ENCODE measurements at regions of chr2 and their contacts with region 1.

Region 1: DNA sequence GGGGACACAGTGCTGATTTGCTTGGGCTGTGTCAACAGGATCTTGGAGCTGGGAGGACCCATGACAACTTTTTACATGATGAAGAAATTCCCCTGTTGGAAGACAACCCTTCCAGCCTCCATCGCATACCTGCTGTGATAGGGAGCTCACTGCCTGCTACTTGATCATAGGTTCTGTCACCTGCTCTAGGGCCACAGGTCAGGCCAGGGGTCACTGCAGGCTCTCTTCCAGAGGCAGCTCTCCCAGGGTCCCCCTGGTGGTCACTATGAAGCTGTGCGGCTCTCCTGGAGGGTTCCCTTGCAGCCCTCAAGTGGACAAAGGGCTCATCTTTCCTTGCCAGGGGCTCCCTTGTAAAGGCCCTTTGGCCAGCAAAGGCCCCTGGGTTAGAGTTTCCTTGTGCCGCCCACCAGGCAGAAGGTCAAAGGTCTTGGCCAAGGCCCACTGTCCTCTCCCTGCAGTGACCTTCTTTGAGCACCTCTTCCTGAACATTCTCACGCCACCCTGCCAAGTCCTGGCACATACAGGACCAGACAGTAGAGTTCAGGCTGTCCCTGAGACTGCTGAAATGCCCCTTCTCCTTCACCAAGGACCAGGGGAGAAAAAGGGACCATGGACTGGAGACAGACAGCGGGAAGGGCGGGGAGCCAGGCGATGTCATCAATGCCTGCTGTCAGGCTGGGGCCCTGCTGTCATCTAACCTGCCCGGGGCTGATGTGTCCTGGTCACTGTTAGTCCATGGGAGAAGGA is 345.1 kb downstream of the DYSF start:
- DNase-seq: no peak
- ATAC-seq: peak; percentile 78
- H3K4me3 ChIP-seq: no peak overlapping the region
- H3K27ac ChIP-seq: no peak overlapping the region
- H3K4me1 ChIP-seq: no peaks in the 10 kb centered on the region
- H3K27me3 ChIP-seq: no peaks in the 10 kb centered on the region
- CTCF ChIP-seq: peak; percentile 80 to 84

Region 2: GRCh38 chr2:71306762-71307161 is 491.7 kb before region 1 on chr2:
- intact Hi-C with region 1: no loop called
- DNase-seq: no peak
- ATAC-seq: peak; percentile 26
- H3K4me3 ChIP-seq: no peak overlapping the region
- H3K27ac ChIP-seq: no peak overlapping the region
- H3K4me1 ChIP-seq: no peaks in the 10 kb centered on the region
- H3K27me3 ChIP-seq: no peaks in the 10 kb centered on the region
- CTCF ChIP-seq: no peak

Region 3: DNA sequence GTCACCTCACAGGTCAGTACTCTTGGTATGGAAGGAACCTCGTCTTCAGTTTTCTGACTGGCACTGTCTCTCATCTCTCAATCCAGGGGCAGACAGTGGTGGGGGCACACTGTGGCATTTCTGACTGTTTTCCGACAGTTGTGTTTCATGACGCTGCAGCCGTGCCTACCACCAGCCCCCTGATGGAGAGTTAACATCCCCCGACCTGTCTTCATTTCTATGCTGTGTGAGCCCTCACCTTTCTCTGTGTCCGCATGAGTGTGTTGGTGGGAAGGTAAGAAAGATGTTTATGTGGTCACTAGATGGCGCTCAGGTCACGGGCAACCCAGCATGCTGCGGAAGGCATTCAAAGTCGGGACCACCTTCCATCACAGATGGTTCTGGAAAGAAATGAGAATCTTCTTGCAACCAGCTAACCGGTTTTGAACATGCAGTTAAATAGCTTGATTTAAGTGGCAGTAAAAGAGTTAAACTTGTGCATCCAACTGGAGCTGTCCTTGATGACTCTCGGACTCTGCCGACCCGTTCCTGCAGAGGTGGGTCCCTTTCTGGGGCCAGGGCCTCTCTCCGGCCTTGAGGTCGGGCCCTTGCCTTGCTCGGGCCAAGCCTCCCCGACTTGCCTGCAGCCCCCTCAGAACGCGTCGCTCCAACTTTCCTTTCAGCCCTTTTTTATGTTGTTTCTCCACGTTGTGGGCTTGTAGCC is 252.7 kb before region 1 on chr2:
- intact Hi-C with region 1: loop called in 1 of 2 experiments (anchors 10 kb)
- DNase-seq: peak in 2 of 4 donors; percentile 66 to 84
- ATAC-seq: peak; percentile 82
- H3K4me3 ChIP-seq: peak overlapping the region in 1 of 2 donors; percentile 16
- H3K27ac ChIP-seq: peak overlapping the region; percentile 1 to 71
- H3K4me1 ChIP-seq: peaks cover 0 to 20% of the 10 kb centered on the region in 2 donors
- H3K27me3 ChIP-seq: peaks cover 0 to 10% of the 10 kb centered on the region in 2 donors
- CTCF ChIP-seq: peak; percentile 20 to 59

Region 4: GRCh38 chr2:71609958-71610357 is 188.5 kb before region 1 on chr2:
- intact Hi-C with region 1: loop called in 1 of 2 experiments (anchors 5 kb)
- DNase-seq: no peak
- ATAC-seq: peak; percentile 67
- H3K4me3 ChIP-seq: no peak overlapping the region
- H3K27ac ChIP-seq: no peak overlapping the region
- H3K4me1 ChIP-seq: peaks cover 4 to 12% of the 10 kb centered on the region in 2 donors
- H3K27me3 ChIP-seq: no peaks in the 10 kb centered on the region
- CTCF ChIP-seq: peak in 1 of 2 donors; percentile 16

Region 5: GRCh38 chr2:72144632-72145288 is 346.3 kb after region 1 on chr2:
- intact Hi-C with region 1: loop called in 1 of 2 experiments (anchors 5 kb)
- DNase-seq: peak in 3 of 4 donors; percentile 39 to 84 (median 51)
- ATAC-seq: peak; percentile 29
- H3K4me3 ChIP-seq: peak overlapping the region; percentile 20 to 39
- H3K27ac ChIP-seq: no peak overlapping the region
- H3K4me1 ChIP-seq: peaks cover 38 to 68% of the 10 kb centered on the region in 2 donors
- H3K27me3 ChIP-seq: peaks cover 56 to 83% of the 10 kb centered on the region in 2 donors
- CTCF ChIP-seq: no peak

Measured in left lung (tissue), 14 donors.